ENCODE measurements at regions of chr5 and their contacts with region 1.

Region 1: GRCh38 chr5:138503487-138504270 is 38.4 kb downstream of the EGR1 start:
- DNase-seq: peak; percentile 44
- ATAC-seq: peak; percentile 79
- H3K4me3 Mint-ChIP-seq: no peak overlapping the region
- H3K27ac Mint-ChIP-seq: no peak overlapping the region
- H3K4me1 Mint-ChIP-seq: no peaks in the 10 kb centered on the region
- H3K27me3 Mint-ChIP-seq: no peaks in the 10 kb centered on the region

Region 2: GRCh38 chr5:137954131-137954879 is 549.4 kb before region 1 on chr5:
- CTCF ChIA-PET with region 1: no interaction called
- POLR2A ChIA-PET with region 1: no interaction called
- intact Hi-C with region 1: no loop called
- DNase-seq: no peak
- ATAC-seq: no peak
- H3K4me3 Mint-ChIP-seq: no peak overlapping the region
- H3K27ac Mint-ChIP-seq: no peak overlapping the region
- H3K4me1 Mint-ChIP-seq: no peaks in the 10 kb centered on the region
- H3K27me3 Mint-ChIP-seq: no peaks in the 10 kb centered on the region

Region 3: GRCh38 chr5:138077065-138077696 is 426.5 kb before region 1 on chr5:
- CTCF ChIA-PET with region 1: interaction called, 3 read pairs
- POLR2A ChIA-PET with region 1: no interaction called
- intact Hi-C with region 1: loop called in 1 of 2 experiments (anchors 2 kb)
- DNase-seq: peak; percentile 70
- ATAC-seq: no peak
- H3K4me3 Mint-ChIP-seq: no peak overlapping the region
- H3K27ac Mint-ChIP-seq: no peak overlapping the region
- H3K4me1 Mint-ChIP-seq: peaks cover 15% of the 10 kb centered on the region
- H3K27me3 Mint-ChIP-seq: no peaks in the 10 kb centered on the region

Region 4: DNA sequence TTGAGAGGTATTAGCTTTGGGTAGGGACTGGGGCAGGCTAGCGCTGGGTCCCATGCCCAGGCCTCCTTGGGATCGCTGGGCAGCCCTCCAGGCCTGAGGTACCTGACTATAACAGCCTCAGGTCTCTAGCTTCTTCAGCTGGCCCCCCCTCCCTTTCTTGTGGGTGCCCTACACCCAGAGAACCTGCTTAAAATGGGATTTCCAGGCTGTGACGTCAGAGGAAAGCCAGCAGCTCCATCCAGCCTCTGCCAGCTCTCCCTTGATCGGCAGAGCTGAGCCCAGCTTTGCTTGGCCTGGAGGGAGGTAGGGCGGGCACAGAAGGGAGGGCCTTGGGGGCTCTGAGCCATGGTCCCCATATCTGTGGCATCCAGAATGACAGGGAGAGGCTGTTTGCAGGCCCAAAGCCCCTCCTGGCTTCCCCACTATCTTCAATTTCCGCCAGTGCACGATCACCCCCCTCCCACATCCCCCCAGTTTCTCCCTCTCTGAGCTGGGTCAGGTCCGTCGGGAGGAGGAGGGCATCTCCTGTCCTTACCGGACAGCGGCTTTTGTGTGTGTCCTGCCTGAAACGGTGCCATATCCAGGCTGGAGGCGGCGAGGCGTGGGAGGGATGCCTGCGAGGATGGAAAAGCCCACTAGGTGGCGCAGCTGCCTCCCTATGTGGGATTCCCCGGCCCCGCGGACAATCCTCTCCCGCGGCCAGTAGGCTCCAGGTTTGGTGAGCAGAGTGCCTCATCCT is 54.0 kb before region 1 on chr5:
- CTCF ChIA-PET with region 1: interaction called, 62 read pairs
- POLR2A ChIA-PET with region 1: interaction called, 5 read pairs
- intact Hi-C with region 1: loop called (anchors 1 kb)
- DNase-seq: peak; percentile 93
- ATAC-seq: peak; percentile 97
- H3K4me3 Mint-ChIP-seq: peak overlapping the region; percentile 23
- H3K27ac Mint-ChIP-seq: peak overlapping the region; percentile 47
- H3K4me1 Mint-ChIP-seq: peaks cover 5% of the 10 kb centered on the region
- H3K27me3 Mint-ChIP-seq: no peaks in the 10 kb centered on the region

Region 5: GRCh38 chr5:138491669-138492559 is 11.8 kb before region 1 on chr5:
- CTCF ChIA-PET with region 1: interaction called, 13 read pairs
- POLR2A ChIA-PET with region 1: no interaction called
- intact Hi-C with region 1: no loop called
- DNase-seq: peak; percentile 92
- ATAC-seq: peak; percentile 99
- H3K4me3 Mint-ChIP-seq: peak overlapping the region; percentile 84
- H3K27ac Mint-ChIP-seq: peak overlapping the region; percentile 79
- H3K4me1 Mint-ChIP-seq: peaks cover 15% of the 10 kb centered on the region
- H3K27me3 Mint-ChIP-seq: peaks cover 23% of the 10 kb centered on the region

Region 6: DNA sequence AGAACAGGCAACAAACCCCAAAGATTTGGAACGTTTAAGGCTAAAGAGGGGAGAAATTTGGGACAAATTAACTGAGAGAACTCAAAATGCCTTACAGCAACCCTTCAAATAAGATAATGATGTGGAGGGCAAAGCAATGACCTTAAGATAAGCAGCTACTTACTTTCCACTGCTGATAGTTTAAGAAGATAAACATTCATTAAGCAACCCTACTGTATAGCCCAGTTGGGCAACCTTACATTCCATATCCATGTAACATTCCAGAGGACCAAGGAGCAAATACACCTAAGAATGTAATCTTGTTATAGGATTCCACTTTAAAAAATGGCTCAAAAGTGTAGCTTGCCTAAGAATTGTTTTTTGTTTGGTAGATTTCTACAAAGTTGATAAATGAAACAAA is 24.5 kb after region 1 on chr5:
- CTCF ChIA-PET with region 1: interaction called, 12 read pairs
- POLR2A ChIA-PET with region 1: interaction called, 3 read pairs
- intact Hi-C with region 1: no loop called
- DNase-seq: no peak
- ATAC-seq: no peak
- H3K4me3 Mint-ChIP-seq: no peak overlapping the region
- H3K27ac Mint-ChIP-seq: peak overlapping the region; percentile 23
- H3K4me1 Mint-ChIP-seq: peaks cover 50% of the 10 kb centered on the region
- H3K27me3 Mint-ChIP-seq: no peaks in the 10 kb centered on the region

Measured in activated CD4-positive, alpha-beta T cell treated with anti-CD3 and anti-CD28 coated beads for 36 hours (primary cell).